ENCODE measurements at regions of chr18 and their contacts with region 1.

Region 1: GRCh38 chr18:158128-159036 is at the start of gene USP14:
- DNase-seq: peak; percentile 91 to 100 (median 97)

Region 2: GRCh38 chr18:250688-251422 is 92.5 kb after region 1 on chr18:
- intact Hi-C with region 1: no loop called
- DNase-seq: no peak

Region 3: GRCh38 chr18:267688-268552 is 109.5 kb after region 1 on chr18 and contains the start of gene THOC1:
- intact Hi-C with region 1: loop called (anchors 5 kb)
- DNase-seq: peak; percentile 92 to 98 (median 96)

Measured in head of caudate nucleus (tissue), 42 donors.